ENCODE measurements at regions of chr13 and their contacts with region 1.

Region 1: GRCh38 chr13:52738719-52739467 is 727 bp downstream of the CNMD start:
- DNase-seq: no peak
- H3K4me3 ChIP-seq: peak overlapping the region in 1 of 3 experiments; percentile 21
- H3K27ac ChIP-seq: no peak overlapping the region
- H3K4me1 ChIP-seq: peaks cover 7% of the 10 kb centered on the region
- H3K27me3 ChIP-seq: peaks cover 20% of the 10 kb centered on the region
- CTCF ChIP-seq: peak in 1 of 2 donors; percentile 21

Region 2: DNA sequence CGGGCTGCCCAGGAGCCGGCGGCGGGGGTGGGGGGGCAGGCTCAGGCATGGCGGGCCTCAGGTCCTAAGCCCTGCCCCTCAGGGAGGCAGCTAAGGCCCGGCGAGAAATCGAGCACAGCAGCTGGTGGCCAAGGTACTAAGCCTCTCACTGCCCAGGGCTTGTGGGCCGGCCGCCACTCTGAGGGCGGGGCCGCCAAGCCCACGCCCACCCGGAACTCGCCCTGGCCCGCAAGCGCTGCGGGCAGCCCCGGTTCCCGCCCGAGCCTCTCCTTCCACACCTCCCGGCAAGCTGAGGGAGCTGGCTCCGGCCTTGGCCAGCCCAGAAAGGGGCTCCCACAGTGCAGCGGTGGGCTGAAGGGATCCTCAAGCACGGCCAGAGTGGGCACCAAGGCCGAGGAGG is 76.4 kb after region 1 on chr13:
- CTCF ChIA-PET with region 1: no interaction called
- dilution Hi-C with region 1: loop called (anchors 5 kb)
- in situ Hi-C with region 1: no loop called
- intact Hi-C with region 1: no loop called
- DNase-seq: no peak
- H3K4me3 ChIP-seq: no peak overlapping the region
- H3K27ac ChIP-seq: no peak overlapping the region
- H3K4me1 ChIP-seq: no peaks in the 10 kb centered on the region
- H3K27me3 ChIP-seq: peaks cover 1% of the 10 kb centered on the region
- CTCF ChIP-seq: no peak

Region 3: GRCh38 chr13:52933547-52934210 is 194.8 kb after region 1 on chr13:
- CTCF ChIA-PET with region 1: no interaction called
- dilution Hi-C with region 1: no loop called
- in situ Hi-C with region 1: no loop called
- intact Hi-C with region 1: no loop called
- DNase-seq: no peak
- H3K4me3 ChIP-seq: no peak overlapping the region
- H3K27ac ChIP-seq: no peak overlapping the region
- H3K4me1 ChIP-seq: no peaks in the 10 kb centered on the region
- H3K27me3 ChIP-seq: no peaks in the 10 kb centered on the region
- CTCF ChIP-seq: no peak